Esophagus muscularis mucosa (tissue), 4 donors: ENCODE measurements at regions of chr4 and their contacts with region 1.

Region 1: GRCh38 chr4:181143250-181143854 is 1099.8 kb upstream of the TENM3 start:
- DNase-seq: peak; percentile 92
- H3K4me3 ChIP-seq: no peak overlapping the region
- H3K27ac ChIP-seq: no peak overlapping the region
- H3K4me1 ChIP-seq: peaks cover 0 to 3% (median 0%) of the 10 kb centered on the region in 4 donors
- H3K27me3 ChIP-seq: peaks cover 0 to 17% (median 2%) of the 10 kb centered on the region in 4 donors
- CTCF ChIP-seq: peak; percentile 73 to 89 (median 87)
- EP300 ChIP-seq: no peak
- POLR2A ChIP-seq: no peak

Region 2: DNA sequence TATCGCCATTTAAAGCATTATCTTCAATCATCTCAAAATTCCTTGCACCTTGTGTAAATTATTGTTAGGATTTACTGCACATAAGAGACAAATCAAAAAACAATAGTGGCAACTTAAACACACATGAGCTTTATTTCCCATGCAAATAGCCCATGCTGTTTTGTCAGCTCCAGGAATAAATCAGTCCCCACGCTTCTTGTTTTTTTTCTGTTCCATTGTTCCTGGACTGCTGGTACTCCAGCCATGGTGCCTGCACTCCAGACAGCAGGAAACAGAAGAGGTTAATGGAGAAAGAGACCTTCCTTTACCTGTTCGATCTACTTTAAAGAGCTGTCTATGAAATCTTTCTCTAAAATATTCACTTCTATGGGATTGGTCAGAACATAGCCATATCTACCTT is 415.9 kb before region 1 on chr4:
- intact Hi-C with region 1: no loop called
- DNase-seq: no peak
- H3K4me3 ChIP-seq: no peak overlapping the region
- H3K27ac ChIP-seq: no peak overlapping the region
- H3K4me1 ChIP-seq: no peaks in the 10 kb centered on the region
- H3K27me3 ChIP-seq: no peaks in the 10 kb centered on the region
- CTCF ChIP-seq: no peak
- EP300 ChIP-seq: no peak
- POLR2A ChIP-seq: no peak

Region 3: GRCh38 chr4:181528570-181529184 is 385.3 kb after region 1 on chr4:
- intact Hi-C with region 1: loop called (anchors 5 kb)
- DNase-seq: no peak
- H3K4me3 ChIP-seq: no peak overlapping the region
- H3K27ac ChIP-seq: no peak overlapping the region
- H3K4me1 ChIP-seq: no peaks in the 10 kb centered on the region
- H3K27me3 ChIP-seq: peaks cover 0 to 6% (median 0%) of the 10 kb centered on the region in 4 donors
- CTCF ChIP-seq: peak; percentile 49 to 66 (median 62)
- EP300 ChIP-seq: no peak
- POLR2A ChIP-seq: no peak

Region 4: DNA sequence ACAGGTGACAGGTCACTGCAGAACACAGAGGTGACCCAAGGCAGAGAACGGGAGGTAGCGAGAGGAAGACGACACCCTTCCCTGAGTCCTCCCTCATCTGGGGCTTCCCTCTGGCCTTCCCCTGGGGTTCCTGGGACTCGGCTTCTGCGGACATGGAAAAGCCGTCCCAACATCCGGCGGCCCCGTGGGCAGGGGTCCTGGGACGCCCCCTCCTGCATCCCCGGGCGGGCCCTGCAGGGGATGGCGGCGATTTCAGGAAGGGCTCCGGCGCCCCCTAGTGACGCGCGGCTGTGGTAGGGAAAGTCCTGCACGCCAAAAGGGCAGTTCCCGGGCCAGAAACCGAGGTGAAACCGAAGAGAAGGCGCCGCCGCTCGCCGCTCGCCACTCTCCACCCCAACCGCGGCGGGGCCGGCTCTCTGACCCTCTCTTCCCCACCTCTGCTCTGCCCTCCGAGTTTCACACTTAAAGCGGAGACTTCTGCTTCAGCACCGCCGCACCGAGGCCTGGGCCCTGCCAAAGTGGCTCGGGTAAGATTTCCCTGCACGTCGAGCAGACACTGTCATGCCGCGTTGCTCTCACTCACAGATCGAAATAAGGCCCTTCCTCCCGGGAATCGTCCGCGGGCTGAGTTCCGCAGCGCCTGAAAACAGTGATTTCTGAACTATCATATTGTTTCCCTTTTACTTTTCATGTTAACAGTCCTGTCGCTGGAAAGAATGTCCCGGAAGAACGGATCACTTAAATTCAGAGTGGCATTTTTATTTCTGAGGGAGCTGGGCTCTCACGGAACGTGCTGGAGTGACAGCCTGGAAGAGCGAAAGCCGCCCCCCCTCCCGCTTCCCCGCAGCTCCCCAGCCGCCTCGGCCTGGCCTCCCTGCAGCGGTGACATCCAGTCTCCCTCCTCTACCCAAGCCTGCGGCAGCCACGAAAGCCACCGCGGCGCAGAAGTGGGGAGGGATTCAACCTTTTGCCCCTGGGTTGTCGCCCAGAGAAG is 1663.2 kb after region 1 on chr4:
- intact Hi-C with region 1: loop called (anchors 5 kb)
- DNase-seq: no peak
- H3K4me3 ChIP-seq: peak overlapping the region; percentile 55 to 62 (median 60)
- H3K27ac ChIP-seq: peak overlapping the region in 3 of 4 donors; percentile 29 to 53 (median 42)
- H3K4me1 ChIP-seq: peaks cover 4 to 15% (median 9%) of the 10 kb centered on the region in 4 donors
- H3K27me3 ChIP-seq: peaks cover 0 to 9% (median 0%) of the 10 kb centered on the region in 4 donors
- CTCF ChIP-seq: peak; percentile 79 to 93 (median 84)
- EP300 ChIP-seq: no peak
- POLR2A ChIP-seq: no peak